AG04449 (cell line): ENCODE measurements at regions of chr3 and their contacts with region 1.

Region 1: DNA sequence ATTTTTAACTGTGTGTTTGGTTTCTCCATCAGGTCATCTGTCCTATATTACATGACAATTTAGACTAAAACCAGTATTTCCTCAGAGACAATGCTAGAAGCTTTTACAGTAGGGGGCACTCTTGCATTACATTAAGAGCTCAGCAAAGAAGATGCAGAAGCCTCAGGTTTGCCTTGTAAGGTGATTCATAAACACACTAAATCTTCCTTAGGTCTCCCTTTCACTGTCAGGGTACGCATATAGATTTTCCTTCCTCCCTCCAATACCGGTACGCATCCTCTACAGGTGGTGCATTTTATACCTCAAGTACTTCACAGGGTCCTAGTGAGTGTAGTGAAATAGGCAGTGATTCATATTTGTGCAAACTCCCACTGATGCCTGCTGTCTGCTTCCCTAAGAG is 46.5 kb downstream of the CD86 start:
- DNase-seq: no peak
- H3K4me3 ChIP-seq: no peak overlapping the region
- CTCF ChIP-seq: peak; percentile 14

Region 2: GRCh38 chr3:122021811-122022401 is 79.7 kb before region 1 on chr3 and contains the start of gene ILDR1:
- CTCF ChIA-PET with region 1: no interaction called
- POLR2A ChIA-PET with region 1: no interaction called
- DNase-seq: no peak
- H3K4me3 ChIP-seq: no peak within 1 kb of the TSS
- CTCF ChIP-seq: no peak

Region 3: DNA sequence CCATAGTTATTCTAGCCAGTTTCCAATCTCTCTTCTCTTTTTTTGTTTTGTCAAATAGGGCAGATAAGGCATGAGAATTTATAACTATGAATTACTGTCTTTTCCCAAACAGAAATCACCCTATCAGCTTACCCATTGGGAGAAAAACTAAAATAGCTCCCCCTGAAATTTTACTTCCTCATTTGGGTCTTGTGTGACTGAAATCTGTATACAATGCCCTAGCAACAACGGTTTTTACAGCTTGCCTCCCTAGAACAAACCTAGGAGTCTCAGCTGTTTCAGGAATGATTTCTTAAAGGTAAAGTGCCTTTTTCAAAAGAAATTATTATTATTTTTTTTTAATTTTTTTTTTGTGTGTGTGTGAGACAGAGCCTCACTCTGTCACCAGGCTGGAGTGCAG is 10.3 kb after region 1 on chr3:
- CTCF ChIA-PET with region 1: interaction called, 11 read pairs
- POLR2A ChIA-PET with region 1: no interaction called
- DNase-seq: no peak
- H3K4me3 ChIP-seq: no peak overlapping the region
- CTCF ChIP-seq: no peak

Region 4: DNA sequence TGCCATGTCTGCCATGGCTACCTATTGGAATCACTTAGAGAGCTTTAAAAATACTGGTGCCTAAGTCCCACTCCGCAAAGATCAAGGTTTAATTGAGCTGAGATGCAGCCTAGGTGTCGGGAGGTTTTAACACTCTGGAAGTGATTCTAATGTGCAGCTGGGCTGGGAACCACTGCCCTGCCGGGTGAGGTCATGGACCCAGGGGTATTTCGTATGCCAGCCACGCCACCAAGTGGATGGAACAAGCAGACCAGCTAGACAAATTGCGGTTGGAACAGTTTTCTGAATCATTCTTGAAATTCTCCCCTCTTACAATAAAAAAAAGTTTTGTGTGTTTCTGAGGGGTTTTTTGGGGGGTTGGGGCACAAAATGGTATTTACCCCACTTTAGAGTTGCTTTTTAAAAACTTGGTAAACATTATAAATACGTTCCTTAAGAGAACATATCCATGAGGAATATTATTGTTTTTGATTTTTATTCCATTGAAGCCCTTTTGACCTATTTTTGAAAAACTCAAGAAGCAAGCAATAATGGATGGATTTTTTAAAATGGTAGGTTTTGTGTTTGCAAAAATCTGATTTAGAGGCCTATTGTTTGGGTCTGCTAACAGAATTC is 157.2 kb after region 1 on chr3:
- CTCF ChIA-PET with region 1: interaction called, 19 read pairs
- POLR2A ChIA-PET with region 1: no interaction called
- DNase-seq: peak; percentile 2
- H3K4me3 ChIP-seq: no peak overlapping the region
- CTCF ChIP-seq: peak; percentile 54